Gastrocnemius medialis (tissue), 4 donors: ENCODE measurements at regions of chr1 and their contacts with region 1.

Region 1: GRCh38 chr1:181479137-181479745 is 4.1 kb upstream of the CACNA1E start:
- DNase-seq: peak in 1 of 2 donors; percentile 19
- ATAC-seq: peak; percentile 74
- H3K4me3 ChIP-seq: no peak overlapping the region
- H3K27ac ChIP-seq: no peak overlapping the region
- H3K4me1 ChIP-seq: no peaks in the 10 kb centered on the region
- H3K27me3 ChIP-seq: peaks cover 29 to 31% (median 30%) of the 10 kb centered on the region in 3 donors
- CTCF ChIP-seq: peak; percentile 55 to 76 (median 67)
- POLR2A ChIP-seq: no peak

Region 2: GRCh38 chr1:181676269-181676668 is 197.0 kb after region 1 on chr1:
- in situ Hi-C with region 1: loop called (anchors 5 to 10 kb)
- intact Hi-C with region 1: no loop called
- DNase-seq: peak in 1 of 2 donors; percentile 10
- ATAC-seq: no peak
- H3K4me3 ChIP-seq: no peak overlapping the region
- H3K27ac ChIP-seq: no peak overlapping the region
- H3K4me1 ChIP-seq: no peaks in the 10 kb centered on the region
- H3K27me3 ChIP-seq: no peaks in the 10 kb centered on the region
- CTCF ChIP-seq: peak in 4 of 5 experiments; percentile 15 to 52 (median 30)
- POLR2A ChIP-seq: no peak

Region 3: DNA sequence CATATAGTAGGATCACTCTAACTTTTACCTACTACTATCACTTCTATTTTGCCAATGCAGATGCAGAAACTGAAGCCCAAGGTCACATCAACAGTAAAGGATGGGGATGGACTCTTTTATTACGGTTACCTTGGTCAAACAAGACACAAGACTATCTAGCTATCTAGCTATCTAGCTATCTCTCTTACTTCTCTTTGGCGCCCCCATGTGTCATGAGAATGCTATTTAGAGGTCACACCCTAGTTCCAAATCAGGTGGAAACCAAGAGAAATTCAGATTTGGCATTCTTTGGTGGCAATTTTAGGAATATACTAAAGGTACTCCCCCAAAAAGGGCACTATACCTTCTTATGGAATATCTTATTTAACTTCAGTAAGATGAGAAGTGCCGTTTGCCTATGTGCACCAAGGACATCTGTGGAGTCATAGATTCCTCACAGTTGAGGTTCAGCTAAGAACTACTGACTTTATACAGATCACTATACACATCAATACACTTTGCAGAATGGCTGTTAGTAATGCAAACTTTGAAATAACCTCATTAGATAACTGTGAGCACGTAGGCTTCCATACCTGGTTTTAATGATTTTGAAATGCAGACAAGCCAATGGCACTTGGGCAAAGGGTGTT is 575.6 kb after region 1 on chr1:
- in situ Hi-C with region 1: loop called in 3 of 4 experiments (anchors 25 kb)
- intact Hi-C with region 1: loop called (anchors 10 kb)
- DNase-seq: no peak
- ATAC-seq: no peak
- H3K4me3 ChIP-seq: no peak overlapping the region
- H3K27ac ChIP-seq: no peak overlapping the region
- H3K4me1 ChIP-seq: no peaks in the 10 kb centered on the region
- H3K27me3 ChIP-seq: no peaks in the 10 kb centered on the region
- CTCF ChIP-seq: peak in 2 of 5 experiments; percentile 19 to 27
- POLR2A ChIP-seq: no peak

Region 4: DNA sequence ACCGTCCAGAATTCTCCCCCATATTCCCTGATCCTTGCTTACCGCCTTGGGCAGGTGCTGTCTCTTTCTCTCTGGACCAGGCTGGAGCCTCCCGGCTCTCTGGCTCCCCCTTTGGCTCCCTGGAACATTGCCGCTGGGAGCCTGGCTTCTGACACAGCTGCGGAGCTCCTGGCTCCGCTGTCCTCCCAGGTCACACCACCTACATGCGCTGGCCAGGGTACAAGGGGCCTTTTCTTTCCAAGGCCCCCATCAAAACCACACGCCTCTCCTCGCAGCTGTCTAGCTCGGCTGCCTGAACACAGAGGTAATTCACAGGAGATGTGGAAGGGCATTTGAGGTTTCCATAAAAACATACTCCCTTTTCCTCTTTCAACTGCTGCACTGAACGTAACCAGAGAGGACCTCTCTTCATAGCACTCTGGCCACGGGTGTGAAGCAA is 589.8 kb after region 1 on chr1:
- in situ Hi-C with region 1: loop called in 3 of 4 experiments (anchors 25 kb)
- intact Hi-C with region 1: no loop called
- DNase-seq: peak in 1 of 2 donors; percentile 32
- ATAC-seq: peak; percentile 85 to 89
- H3K4me3 ChIP-seq: peak overlapping the region in 1 of 4 donors; percentile 24
- H3K27ac ChIP-seq: no peak overlapping the region
- H3K4me1 ChIP-seq: peaks cover 9 to 15% of the 10 kb centered on the region in 2 donors
- H3K27me3 ChIP-seq: no peaks in the 10 kb centered on the region
- CTCF ChIP-seq: peak; percentile 6 to 80 (median 48)
- POLR2A ChIP-seq: no peak

Region 5: DNA sequence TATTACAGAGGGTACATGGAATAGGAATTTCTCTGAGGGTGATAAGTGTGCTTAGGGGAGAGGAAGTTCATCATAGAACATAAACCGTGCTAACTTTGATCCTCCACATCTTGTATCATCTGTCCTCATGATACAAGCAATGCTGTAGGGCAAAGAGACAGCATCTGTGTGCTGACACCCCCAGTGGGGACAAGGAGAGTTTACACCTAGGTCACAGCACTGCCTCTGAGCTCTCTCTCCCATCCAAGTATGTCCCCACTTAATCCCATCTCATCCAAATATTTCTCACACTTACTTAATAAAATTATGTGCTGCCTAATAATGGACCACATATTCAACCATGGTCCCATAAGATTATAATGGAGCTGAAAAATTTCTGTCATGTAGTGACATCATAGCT is 925.5 kb after region 1 on chr1:
- in situ Hi-C with region 1: loop called in 1 of 4 experiments (anchors 25 kb)
- intact Hi-C with region 1: no loop called
- DNase-seq: no peak
- ATAC-seq: no peak
- H3K4me3 ChIP-seq: no peak overlapping the region
- H3K27ac ChIP-seq: no peak overlapping the region
- H3K4me1 ChIP-seq: no peaks in the 10 kb centered on the region
- H3K27me3 ChIP-seq: no peaks in the 10 kb centered on the region
- CTCF ChIP-seq: no peak
- POLR2A ChIP-seq: no peak